ENCODE measurements at regions of chr7 and their contacts with region 1.

Region 1: DNA sequence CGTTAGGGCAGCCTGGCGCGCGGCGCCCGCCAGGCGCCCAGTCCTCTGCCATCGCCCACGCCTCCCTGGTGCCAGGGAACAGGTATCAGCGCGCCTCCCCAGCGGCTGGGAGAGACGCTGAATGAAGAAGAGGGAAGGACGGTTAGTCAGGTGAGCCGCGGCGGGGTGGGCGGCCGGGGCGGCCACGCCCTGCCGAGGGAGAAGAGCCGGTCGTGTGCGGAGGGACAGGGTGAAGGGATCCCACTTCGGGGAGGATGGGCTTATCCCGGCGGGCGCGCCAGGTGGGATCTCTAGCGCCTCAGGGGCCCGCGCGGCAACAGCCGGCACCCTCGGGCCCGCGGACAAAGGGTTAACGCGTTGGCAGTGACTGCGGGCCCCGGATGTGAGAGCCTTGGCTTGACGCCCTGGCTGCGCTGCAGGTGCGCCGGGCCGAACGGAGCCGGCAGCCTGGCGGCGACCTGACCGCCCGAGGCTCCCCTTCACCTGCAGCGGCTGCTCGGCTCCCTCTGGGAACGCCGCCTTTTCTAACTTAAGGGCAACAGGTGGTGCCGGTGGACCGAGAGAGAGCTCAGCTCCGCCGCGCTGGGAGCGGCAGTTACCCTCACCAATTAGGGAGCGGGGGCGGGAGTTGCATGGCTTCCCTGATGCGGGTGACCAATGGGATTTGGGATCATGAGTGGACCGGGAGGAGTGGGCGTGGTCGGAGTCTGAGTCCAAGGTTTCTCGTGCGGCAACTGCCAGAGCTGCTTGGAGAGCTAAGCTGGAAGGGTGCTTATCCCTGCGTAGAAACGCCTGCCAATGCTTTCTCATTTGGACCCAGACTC is at the start of gene ARL4A:
- DNase-seq: peak; percentile 99
- total RNA-seq, gene ARL4A: 17.7 TPM

Region 2: GRCh38 chr7:12653519-12653917 is 33.6 kb before region 1 on chr7:
- intact Hi-C with region 1: no loop called
- DNase-seq: no peak

Region 3: GRCh38 chr7:12729112-12729511 is 42.0 kb after region 1 on chr7:
- intact Hi-C with region 1: loop called (anchors 5 kb)
- DNase-seq: peak; percentile 82

Region 4: DNA sequence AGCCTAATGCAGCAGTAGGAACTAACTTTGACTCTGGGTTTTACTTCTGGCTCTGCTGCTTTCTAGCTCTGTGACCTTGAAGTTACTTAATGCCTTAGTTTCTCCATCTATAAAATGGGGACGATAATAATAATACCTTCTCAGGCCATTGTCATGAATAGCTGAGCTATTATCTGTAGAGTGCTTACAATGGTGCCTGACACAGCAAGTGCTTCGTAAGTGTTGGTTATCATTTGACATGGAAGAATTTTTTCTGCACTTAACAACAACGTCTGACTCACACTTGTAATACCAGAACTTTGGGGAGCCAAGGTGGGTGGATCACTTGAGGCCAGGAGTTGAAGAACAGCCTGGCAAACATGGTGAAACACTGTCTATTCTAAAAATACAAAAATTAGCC is 140.8 kb after region 1 on chr7:
- intact Hi-C with region 1: loop called (anchors 2 kb)
- DNase-seq: no peak

Region 5: DNA sequence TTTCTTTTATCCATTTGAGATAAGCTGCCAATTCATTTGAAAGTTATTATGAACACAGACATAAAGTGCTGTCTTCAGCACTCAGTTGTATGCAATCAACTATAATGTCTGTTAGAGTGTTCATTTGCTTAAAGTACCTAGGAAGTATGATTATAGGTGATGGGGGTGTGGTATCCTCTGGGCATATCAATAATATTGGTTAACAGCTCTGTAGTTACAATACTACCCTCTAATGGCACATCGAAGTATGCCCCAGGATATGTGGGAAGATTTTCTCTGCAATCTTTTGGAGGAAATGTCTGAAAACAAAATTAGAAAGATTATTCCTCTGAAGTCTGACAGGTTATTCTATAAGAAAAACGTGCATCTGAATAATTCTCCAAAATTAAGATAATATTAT is 430.0 kb after region 1 on chr7:
- intact Hi-C with region 1: loop called (anchors 5 kb)
- DNase-seq: no peak

Region 6: GRCh38 chr7:13262929-13263530 is 575.9 kb after region 1 on chr7:
- intact Hi-C with region 1: loop called (anchors 2 kb)
- DNase-seq: no peak

Measured in cardiac septum (tissue), 1 donor.